Calu3 (cell line): ENCODE measurements at regions of chr10 and their contacts with region 1.

Region 1: GRCh38 chr10:21194464-21194993 is 297.4 kb upstream of the NEBL start:
- DNase-seq: peak; percentile 81
- H3K4me3 Mint-ChIP-seq: peak overlapping the region; percentile 7
- H3K27ac Mint-ChIP-seq: peak overlapping the region; percentile 84
- H3K4me1 Mint-ChIP-seq: peaks cover 36% of the 10 kb centered on the region
- H3K27me3 Mint-ChIP-seq: no peaks in the 10 kb centered on the region
- CTCF ChIP-seq: no peak

Region 2: GRCh38 chr10:21057989-21058388 is 136.5 kb before region 1 on chr10:
- CTCF ChIA-PET with region 1: no interaction called
- intact Hi-C with region 1: no loop called
- DNase-seq: no peak
- H3K4me3 Mint-ChIP-seq: no peak overlapping the region
- H3K27ac Mint-ChIP-seq: no peak overlapping the region
- H3K4me1 Mint-ChIP-seq: no peaks in the 10 kb centered on the region
- H3K27me3 Mint-ChIP-seq: no peaks in the 10 kb centered on the region
- CTCF ChIP-seq: no peak

Region 3: DNA sequence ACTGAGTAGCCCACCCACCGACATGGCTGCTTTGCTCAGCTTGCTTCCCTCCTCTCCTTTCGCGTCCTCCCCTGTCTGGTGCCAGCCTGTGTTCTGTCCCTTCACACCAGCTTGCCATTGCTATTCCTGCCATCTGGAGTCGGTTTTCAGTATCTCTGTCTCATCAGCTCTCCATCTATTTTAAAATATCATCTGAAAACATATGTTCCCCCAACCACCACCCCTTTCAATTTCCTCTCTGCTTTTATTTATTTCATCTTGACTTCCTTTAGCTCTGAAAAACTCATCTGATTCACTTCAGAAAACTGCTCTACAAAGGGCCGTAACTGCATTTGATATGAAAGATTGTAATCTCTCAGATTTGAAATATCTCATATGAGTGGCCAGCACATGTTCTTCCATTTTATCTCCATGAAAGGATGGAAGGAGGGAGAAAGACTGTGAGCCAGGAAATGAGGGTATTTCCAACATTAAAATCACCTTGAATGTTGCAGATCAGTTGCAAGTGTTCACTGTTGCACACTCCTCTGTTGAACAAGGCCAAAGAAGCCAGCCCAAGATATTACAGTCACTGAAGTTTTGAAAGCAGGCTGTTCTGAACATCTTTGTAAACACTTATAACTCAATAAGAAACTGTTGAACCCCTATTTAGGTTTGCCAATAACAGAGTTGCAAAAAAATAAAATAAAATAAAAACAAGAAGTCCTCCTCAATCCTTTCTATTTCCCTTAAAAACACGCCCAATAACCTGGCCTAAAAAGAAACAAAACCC is 95.1 kb before region 1 on chr10:
- CTCF ChIA-PET with region 1: interaction called, 5 read pairs
- intact Hi-C with region 1: loop called (anchors 5 kb)
- DNase-seq: no peak
- H3K4me3 Mint-ChIP-seq: no peak overlapping the region
- H3K27ac Mint-ChIP-seq: peak overlapping the region; percentile 57
- H3K4me1 Mint-ChIP-seq: peaks cover 41% of the 10 kb centered on the region
- H3K27me3 Mint-ChIP-seq: no peaks in the 10 kb centered on the region
- CTCF ChIP-seq: no peak

Region 4: GRCh38 chr10:21238717-21239116 is 44.2 kb after region 1 on chr10:
- CTCF ChIA-PET with region 1: interaction called, 5 read pairs
- intact Hi-C with region 1: loop called (anchors 2 kb)
- DNase-seq: no peak
- H3K4me3 Mint-ChIP-seq: no peak overlapping the region
- H3K27ac Mint-ChIP-seq: no peak overlapping the region
- H3K4me1 Mint-ChIP-seq: peaks cover 10% of the 10 kb centered on the region
- H3K27me3 Mint-ChIP-seq: no peaks in the 10 kb centered on the region
- CTCF ChIP-seq: no peak

Region 5: DNA sequence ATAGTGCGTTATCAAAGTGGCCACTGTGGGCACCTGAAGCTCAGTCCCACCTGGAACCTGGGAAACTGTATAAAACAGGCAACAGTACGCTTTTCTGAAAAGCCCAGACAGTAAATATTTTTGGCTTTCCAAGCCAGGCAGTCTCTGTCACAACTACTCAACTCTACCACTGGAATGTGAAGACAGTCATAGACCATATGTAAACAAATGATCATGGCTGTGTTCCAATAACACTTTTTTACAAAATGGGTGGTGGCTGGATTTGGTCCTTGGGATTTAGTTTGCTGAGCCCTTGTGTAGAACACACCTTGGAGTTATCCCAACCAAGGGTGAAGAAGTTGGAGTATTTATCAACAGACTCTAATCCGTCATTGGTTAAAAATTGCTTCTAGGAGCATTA is 71.1 kb after region 1 on chr10:
- CTCF ChIA-PET with region 1: no interaction called
- intact Hi-C with region 1: loop called (anchors 5 kb)
- DNase-seq: no peak
- H3K4me3 Mint-ChIP-seq: no peak overlapping the region
- H3K27ac Mint-ChIP-seq: no peak overlapping the region
- H3K4me1 Mint-ChIP-seq: peaks cover 8% of the 10 kb centered on the region
- H3K27me3 Mint-ChIP-seq: no peaks in the 10 kb centered on the region
- CTCF ChIP-seq: no peak